CD4-positive, alpha-beta memory T cell (primary cell): ENCODE measurements at regions of chr2 and their contacts with region 1.

Region 1: GRCh38 chr2:182666674-182667314 is 49.3 kb upstream of the DNAJC10 start:
- DNase-seq: peak in 4 of 5 donors; percentile 18 to 36 (median 23)
- H3K4me3 ChIP-seq: no peak overlapping the region
- H3K4me3 Mint-ChIP-seq: no peak overlapping the region
- H3K27ac ChIP-seq: no peak overlapping the region
- H3K27ac Mint-ChIP-seq: no peak overlapping the region
- H3K4me1 ChIP-seq: no peaks in the 10 kb centered on the region
- H3K4me1 Mint-ChIP-seq: peaks cover 0 to 1% (median 0%) of the 10 kb centered on the region in 4 donors
- H3K27me3 ChIP-seq: no peaks in the 10 kb centered on the region
- H3K27me3 Mint-ChIP-seq: peaks cover 0 to 4% of the 10 kb centered on the region in 2 donors

Region 2: GRCh38 chr2:183093857-183094657 is 427.3 kb after region 1 on chr2:
- CTCF ChIA-PET with region 1: interaction called, 4 read pairs
- POLR2A ChIA-PET with region 1: no interaction called
- intact Hi-C with region 1: loop called (anchors 1 kb)
- DNase-seq: peak in 1 of 5 donors; percentile 6
- H3K4me3 ChIP-seq: no peak overlapping the region
- H3K4me3 Mint-ChIP-seq: no peak overlapping the region
- H3K27ac ChIP-seq: no peak overlapping the region
- H3K27ac Mint-ChIP-seq: no peak overlapping the region
- H3K4me1 ChIP-seq: no peaks in the 10 kb centered on the region
- H3K4me1 Mint-ChIP-seq: no peaks in the 10 kb centered on the region
- H3K27me3 ChIP-seq: no peaks in the 10 kb centered on the region
- H3K27me3 Mint-ChIP-seq: no peaks in the 10 kb centered on the region